ENCODE measurements at regions of chr14 and their contacts with region 1.

Region 1: DNA sequence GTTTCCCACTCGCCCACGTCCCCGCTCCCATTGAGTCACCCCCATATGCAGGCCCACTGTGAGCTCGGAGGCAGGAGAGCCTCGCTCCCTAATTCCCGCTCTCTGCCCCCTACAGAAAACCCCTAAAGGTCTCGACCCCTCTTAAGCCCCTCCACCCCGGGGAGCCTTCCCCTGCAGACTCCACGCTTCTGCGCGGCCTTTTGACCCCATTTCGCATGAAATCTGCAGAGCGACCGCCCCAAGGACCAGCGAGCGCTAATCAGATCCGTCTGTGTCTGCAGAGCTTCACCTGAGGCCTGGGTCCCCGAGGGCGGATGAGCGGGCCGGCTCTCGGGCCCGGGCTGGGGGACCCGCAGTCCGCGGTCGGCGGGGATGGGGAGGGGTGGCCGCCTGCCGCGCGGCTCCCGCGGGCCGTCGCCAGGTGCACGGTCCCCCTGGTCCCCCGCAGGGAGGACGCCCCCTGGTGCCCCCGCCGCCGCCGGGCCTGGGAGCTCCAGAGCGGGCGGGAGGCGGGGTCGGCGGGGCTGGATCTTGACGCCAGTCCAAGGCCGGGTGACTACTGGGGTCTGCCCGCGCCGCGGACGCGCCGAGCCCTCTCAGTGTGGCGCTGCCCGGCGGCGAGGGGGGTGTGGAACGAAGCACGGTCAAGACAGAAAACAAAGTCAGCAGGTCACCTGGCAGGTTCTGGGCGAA is 10.1 kb downstream of the BMP4 start:
- DNase-seq: no peak
- H3K4me3 ChIP-seq: peak overlapping the region; percentile 32
- H3K27ac ChIP-seq: no peak overlapping the region
- H3K4me1 ChIP-seq: no peaks in the 10 kb centered on the region
- H3K27me3 ChIP-seq: peaks cover 4% of the 10 kb centered on the region
- CTCF ChIP-seq: no peak

Region 2: DNA sequence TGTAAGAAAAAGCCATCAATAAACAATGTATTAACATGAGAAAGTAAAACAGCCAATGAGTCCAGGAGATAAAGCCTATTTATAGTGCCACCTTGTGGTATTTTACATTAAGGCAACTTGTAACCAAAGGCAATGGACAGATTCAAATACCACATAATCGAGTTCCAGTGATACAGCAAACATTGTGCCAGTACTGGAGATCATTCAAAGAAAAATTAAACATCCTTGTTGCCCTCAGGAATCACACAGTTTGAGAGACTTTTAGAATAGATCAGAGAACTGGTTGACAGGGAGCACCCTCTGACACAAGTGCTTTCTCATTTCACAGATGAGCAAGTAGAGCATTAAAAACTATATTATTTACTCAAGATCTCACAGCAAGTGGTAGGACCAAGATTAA is 891.5 kb before region 1 on chr14:
- intact Hi-C with region 1: no loop called
- DNase-seq: no peak
- H3K4me3 ChIP-seq: no peak overlapping the region
- H3K27ac ChIP-seq: no peak overlapping the region
- H3K4me1 ChIP-seq: no peaks in the 10 kb centered on the region
- H3K27me3 ChIP-seq: no peaks in the 10 kb centered on the region
- CTCF ChIP-seq: peak; percentile 68

Region 3: GRCh38 chr14:54169254-54169924 is 222.8 kb after region 1 on chr14:
- intact Hi-C with region 1: loop called (anchors 10 kb)
- DNase-seq: no peak
- H3K4me3 ChIP-seq: no peak overlapping the region
- H3K27ac ChIP-seq: no peak overlapping the region
- H3K4me1 ChIP-seq: no peaks in the 10 kb centered on the region
- H3K27me3 ChIP-seq: no peaks in the 10 kb centered on the region
- CTCF ChIP-seq: no peak

Region 4: GRCh38 chr14:54329082-54329695 is 382.6 kb after region 1 on chr14:
- intact Hi-C with region 1: no loop called
- DNase-seq: peak; percentile 41
- H3K4me3 ChIP-seq: no peak overlapping the region
- H3K27ac ChIP-seq: no peak overlapping the region
- H3K4me1 ChIP-seq: no peaks in the 10 kb centered on the region
- H3K27me3 ChIP-seq: no peaks in the 10 kb centered on the region
- CTCF ChIP-seq: peak; percentile 56

Measured in colonic mucosa (tissue), 4 donors.